ENCODE measurements at regions of chr17 and their contacts with region 1.

Region 1: DNA sequence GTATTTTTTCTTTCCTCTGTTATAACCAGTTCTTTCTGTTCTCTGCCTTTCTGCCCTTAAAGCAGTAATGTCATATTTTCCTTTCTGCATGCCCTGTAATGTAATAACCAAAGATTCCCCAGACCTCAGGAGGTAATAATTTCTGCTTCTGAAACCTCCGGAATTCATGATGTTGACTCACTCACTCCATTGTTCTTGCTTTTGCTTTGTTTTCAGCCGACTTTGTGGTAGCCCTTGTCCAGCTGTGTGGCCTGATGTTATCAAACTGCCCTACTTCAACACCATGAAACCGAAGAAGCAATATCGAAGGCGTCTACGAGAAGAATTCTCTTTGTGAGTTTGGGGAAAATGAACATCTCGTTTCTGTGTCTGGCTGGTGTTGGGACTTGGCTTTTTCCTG is 55.9 kb downstream of the CDK12 start:
- DNase-seq: no peak
- ATAC-seq: no peak

Region 2: GRCh38 chr17:39123627-39124026 is 393.6 kb before region 1 on chr17:
- intact Hi-C with region 1: no loop called
- DNase-seq: no peak
- ATAC-seq: peak; percentile 58

Region 3: GRCh38 chr17:39429600-39429999 is 87.6 kb before region 1 on chr17:
- intact Hi-C with region 1: loop called (anchors 10 kb)
- DNase-seq: no peak
- ATAC-seq: no peak

Region 4: DNA sequence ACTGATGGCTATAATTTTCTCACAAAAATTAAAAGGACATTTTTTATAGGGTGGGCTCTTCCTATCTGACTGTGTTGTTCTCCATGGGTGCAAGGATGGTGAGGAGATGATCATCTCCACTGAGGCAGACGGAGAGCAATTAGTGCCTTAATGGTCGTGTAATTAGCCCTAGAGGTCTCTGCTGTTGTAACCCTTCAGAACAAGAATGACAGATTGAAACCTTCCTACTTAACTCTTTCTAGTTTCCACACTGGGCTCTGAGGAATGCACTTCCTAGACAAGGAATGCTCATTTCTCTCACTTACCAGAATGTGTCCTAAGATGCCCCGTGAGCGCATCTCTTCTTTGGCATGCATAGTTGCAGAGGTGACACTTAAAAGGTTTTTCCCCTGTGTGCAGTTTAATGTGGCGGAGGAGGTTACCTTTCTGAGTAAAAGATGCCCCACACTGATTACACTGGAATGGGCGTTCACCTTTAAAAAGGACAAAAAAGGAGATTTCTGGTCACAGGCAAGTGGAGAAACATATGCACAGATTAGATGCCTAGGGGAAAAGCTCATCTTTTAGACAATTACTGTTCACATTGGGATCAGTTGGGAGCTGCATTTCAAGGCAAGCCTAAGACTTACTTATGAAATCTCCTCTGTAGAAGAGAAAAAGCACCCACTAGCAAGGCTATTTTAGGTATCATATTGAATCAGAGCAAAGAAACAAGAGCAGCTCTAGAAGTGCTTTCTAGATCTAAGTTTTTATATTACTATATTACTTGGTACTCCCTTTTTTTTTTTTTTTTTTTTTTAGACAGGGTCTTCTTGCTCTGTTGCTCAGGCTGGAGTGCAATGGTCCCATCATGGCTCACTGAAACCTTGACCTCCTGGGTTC is 274.1 kb after region 1 on chr17:
- intact Hi-C with region 1: no loop called
- DNase-seq: no peak
- ATAC-seq: no peak

Measured in Right ventricle myocardium inferior (tissue), 1 donor.